Esophagus muscularis mucosa (tissue), 4 donors: ENCODE measurements at regions of chr3 and their contacts with region 1.

Region 1: DNA sequence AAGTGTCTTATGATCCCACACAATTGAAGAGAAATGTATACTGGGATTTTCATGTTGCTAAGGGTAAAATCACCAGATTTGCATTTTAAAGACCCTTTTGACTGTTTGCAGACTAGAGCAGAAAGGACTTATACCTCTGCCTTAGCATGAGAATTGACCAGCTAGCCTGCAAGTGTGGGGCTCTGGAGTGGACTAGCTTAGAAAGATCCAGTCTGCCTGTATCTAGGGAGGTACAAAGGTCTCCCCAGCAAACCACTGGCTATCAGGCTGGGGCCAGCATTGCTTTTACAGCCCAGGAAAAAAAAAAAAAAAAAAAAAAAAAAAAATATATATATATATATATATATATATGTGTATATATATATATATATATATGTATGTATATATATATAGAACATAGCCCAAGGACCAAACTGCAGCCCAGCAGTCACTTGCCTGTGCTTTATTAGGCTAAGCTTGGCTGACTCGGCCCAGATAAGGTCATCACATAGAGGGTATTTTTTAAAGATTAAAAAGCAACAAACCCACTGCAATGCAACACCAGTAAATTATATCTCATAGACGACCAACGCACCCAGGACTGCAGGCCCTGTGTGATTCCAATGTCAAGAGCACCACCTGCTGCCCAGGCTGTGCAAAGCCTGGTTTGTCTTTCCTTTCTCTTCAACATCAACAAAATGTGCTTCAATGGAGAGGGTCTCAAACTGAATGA is 63.7 kb downstream of the DCLK3 start:
- DNase-seq: peak; percentile 86
- H3K4me3 ChIP-seq: no peak overlapping the region
- H3K27ac ChIP-seq: no peak overlapping the region
- H3K4me1 ChIP-seq: no peaks in the 10 kb centered on the region
- H3K27me3 ChIP-seq: peaks cover 0 to 3% (median 0%) of the 10 kb centered on the region in 4 donors
- CTCF ChIP-seq: peak; percentile 63 to 76 (median 64)
- EP300 ChIP-seq: no peak
- POLR2A ChIP-seq: no peak

Region 2: GRCh38 chr3:35965908-35966307 is 734.8 kb before region 1 on chr3:
- intact Hi-C with region 1: loop called (anchors 2 kb)
- DNase-seq: no peak
- H3K4me3 ChIP-seq: no peak overlapping the region
- H3K27ac ChIP-seq: no peak overlapping the region
- H3K4me1 ChIP-seq: peaks cover 0 to 7% (median 4%) of the 10 kb centered on the region in 4 donors
- H3K27me3 ChIP-seq: no peaks in the 10 kb centered on the region
- CTCF ChIP-seq: peak; percentile 40 to 56 (median 48)
- EP300 ChIP-seq: no peak
- POLR2A ChIP-seq: no peak